A673 (cell line): ENCODE measurements at regions of chr4 and their contacts with region 1.

Region 1: GRCh38 chr4:143025081-143025704 is 159.5 kb upstream of the USP38 start:
- DNase-seq: peak; percentile 52
- H3K4me3 ChIP-seq: no peak overlapping the region
- H3K27ac ChIP-seq: no peak overlapping the region
- H3K4me1 ChIP-seq: no peaks in the 10 kb centered on the region
- H3K27me3 ChIP-seq: no peaks in the 10 kb centered on the region
- CTCF ChIP-seq: peak; percentile 53

Region 2: GRCh38 chr4:142883040-142883832 is 142.0 kb before region 1 on chr4:
- CTCF ChIA-PET with region 1: interaction called, 3 read pairs
- POLR2A ChIA-PET with region 1: no interaction called
- intact Hi-C with region 1: loop called (anchors 1 kb)
- DNase-seq: peak; percentile 35
- H3K4me3 ChIP-seq: no peak overlapping the region
- H3K27ac ChIP-seq: no peak overlapping the region
- H3K4me1 ChIP-seq: no peaks in the 10 kb centered on the region
- H3K27me3 ChIP-seq: no peaks in the 10 kb centered on the region
- CTCF ChIP-seq: peak; percentile 61

Region 3: DNA sequence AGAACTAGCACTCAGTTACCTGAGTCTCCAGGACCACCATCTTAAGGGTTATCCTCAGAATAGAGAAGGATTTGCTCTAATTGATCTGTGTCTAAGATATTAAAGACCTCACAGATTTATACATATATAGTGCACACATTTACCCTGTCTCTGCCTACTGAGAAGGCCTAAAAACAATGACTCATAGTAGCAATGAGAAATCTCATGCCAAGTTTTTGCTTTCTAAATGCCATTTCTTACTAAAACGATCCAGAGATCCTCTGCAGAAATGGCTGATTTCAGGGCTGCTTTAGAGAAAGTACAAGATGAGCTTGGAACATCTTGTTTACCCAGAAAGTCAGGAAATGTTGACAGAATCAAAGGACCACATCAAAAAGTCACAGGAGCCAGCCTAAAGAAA is 100.0 kb before region 1 on chr4:
- CTCF ChIA-PET with region 1: no interaction called
- POLR2A ChIA-PET with region 1: no interaction called
- intact Hi-C with region 1: no loop called
- DNase-seq: no peak
- H3K4me3 ChIP-seq: no peak overlapping the region
- H3K27ac ChIP-seq: no peak overlapping the region
- H3K4me1 ChIP-seq: no peaks in the 10 kb centered on the region
- H3K27me3 ChIP-seq: no peaks in the 10 kb centered on the region
- CTCF ChIP-seq: no peak

Region 4: GRCh38 chr4:143389579-143390195 is 364.5 kb after region 1 on chr4:
- CTCF ChIA-PET with region 1: no interaction called
- POLR2A ChIA-PET with region 1: no interaction called
- intact Hi-C with region 1: no loop called
- DNase-seq: no peak
- H3K4me3 ChIP-seq: no peak overlapping the region
- H3K27ac ChIP-seq: no peak overlapping the region
- H3K4me1 ChIP-seq: peaks cover 36% of the 10 kb centered on the region
- H3K27me3 ChIP-seq: no peaks in the 10 kb centered on the region
- CTCF ChIP-seq: no peak